ENCODE measurements at regions of chr17 and their contacts with region 1.

Region 1: DNA sequence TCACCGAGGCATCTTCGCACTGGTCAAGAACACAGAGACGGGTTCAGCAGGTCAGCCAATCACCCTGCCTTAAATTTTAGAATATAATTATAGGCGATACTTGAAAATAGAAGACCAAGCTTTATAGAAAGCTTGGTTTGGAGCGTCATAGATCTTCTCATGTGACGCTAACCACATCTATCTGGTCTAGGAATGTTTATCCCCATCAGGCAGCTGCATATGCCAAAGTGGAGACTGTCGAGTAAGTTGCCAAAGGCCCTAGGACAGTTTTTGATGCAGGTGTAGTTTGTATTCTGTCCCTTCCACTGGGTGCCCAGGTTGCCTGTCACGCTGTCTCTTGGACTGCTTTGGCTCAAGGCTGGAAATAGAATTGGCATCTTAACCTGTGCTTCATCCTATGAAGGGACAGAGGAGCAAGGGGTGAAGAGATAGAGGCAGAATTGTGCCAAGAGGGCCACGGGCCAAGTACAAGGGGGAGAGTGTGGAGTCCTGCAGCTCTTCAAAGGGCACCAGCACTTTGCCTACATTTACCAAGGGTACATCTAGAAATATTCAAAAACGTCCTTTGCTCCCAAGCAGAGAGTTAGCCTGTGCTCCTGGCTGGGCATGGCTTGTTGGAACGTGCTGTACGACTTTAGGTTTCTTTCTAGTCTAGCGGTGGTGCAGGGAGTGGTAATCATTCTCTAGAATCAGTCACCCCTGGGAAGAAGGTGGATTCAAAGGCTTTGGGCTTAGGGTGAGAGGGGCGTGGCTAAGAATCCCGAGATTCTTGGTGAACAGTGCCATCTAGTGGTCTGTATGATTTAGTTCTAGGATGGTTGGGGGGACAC is 5.3 kb upstream of the WIPI1 start:
- DNase-seq: peak; percentile 74
- ATAC-seq: peak; percentile 83

Region 2: DNA sequence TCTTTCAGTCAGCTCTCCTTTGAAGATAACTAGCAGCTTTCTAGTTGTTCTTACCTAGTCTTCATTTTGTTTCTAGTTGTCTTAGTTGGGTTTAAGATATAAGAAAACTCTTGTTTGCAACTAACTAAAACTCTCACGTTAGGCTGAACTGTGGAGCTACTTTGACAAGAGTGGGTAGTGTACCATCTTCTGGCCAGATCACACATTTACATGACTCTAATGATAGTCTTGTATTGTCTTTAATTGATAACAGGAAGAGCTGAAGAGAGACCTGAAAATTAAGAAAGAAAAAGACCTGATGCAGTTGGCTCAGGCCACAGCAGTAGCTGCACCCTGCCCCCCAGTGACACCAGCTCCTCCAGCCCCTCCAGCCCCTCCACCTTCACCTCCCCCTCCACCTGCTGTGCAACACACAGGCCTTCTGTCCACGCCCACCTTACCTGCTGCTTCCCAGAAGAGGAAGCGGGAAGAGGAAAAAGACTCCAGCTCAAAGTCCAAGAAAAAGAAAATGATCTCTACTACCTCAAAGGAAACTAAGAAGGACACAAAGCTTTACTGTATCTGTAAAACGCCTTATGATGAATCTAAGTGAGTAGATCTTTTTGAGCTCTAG is 503.2 kb before region 1 on chr17:
- intact Hi-C with region 1: loop called in 1 of 2 experiments (anchors 10 kb)
- DNase-seq: no peak
- ATAC-seq: no peak

Region 3: GRCh38 chr17:68172461-68172954 is 290.1 kb before region 1 on chr17:
- intact Hi-C with region 1: loop called in 1 of 2 experiments (anchors 10 kb)
- DNase-seq: peak; percentile 60
- ATAC-seq: peak; percentile 78 to 81

Region 4: DNA sequence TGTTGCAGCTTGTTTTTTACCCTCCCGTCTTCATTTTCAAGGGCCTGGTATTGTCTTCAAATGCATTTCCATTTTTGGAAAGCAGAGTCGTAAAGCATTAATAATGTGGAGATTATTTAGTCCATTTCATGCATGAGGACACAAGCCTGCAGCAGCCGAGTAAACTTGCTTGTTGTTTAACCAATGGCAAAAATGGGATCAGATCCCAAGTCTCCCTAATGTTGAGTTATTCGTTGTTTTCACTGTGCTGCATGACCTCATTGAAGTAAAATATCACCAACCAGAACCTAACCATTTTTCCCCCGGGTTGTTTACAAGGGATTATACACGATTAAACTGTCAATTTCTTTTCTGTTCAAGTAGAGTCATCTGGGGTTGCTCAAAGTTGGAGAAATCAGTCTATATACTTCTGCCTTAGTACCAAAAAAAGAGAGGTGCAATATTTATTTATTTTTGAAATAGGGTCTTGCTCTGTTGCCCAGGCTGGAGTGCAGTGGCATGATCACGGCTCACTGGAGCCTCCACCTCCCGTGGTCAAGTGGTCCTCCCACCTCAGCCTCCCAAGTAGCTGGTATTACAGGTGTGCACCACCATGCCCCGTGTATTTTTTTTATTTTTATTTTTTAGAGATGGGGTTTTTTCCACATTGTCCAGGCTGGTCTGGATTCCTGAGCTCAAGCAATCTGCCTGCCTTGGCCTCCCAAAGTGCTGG is 202.4 kb before region 1 on chr17:
- intact Hi-C with region 1: loop called in 1 of 2 experiments (anchors 2 kb)
- DNase-seq: no peak
- ATAC-seq: no peak